ENCODE measurements at regions of chr7 and their contacts with region 1.

Region 1: DNA sequence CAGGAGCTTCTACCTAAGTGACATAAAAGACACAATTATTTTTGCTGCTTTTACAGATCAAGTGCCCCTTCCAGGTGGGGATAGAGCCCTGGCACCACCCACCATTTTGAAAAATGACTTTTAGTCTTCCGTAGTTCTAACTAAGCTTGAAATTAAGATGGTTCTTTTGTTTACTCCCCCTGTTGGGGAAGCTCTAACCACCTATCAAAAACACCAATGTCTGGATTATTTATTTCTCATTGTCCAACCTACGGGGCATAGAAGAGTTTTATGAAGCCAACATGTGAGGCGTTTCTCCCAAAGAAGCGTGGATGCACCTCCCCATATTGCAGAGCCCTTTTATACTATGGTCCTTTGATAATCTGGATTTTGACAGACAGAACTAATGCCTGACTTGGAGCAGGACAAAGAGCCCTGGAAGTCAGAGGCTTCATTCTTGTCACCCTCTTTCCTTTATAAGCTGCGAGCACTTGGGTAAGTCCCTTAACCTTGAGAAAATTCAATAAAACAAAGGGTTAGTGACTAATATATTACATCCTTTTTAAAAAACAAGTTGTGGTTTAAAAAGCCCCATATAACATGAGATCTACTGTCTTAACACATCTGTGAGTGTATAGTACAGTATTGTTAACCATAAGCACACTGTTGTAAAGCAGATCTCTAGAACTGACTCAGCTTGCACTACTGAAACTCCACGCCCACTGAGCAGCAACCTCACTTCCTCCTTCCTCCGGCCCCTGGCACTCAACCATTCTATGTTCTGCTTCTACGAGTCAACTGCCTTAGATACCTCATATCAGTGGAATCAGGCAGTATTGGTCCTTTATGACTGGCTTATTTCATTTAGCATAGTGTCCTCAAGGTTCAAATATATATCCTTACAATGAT is 67.5 kb downstream of the ATXN7L1 start:
- DNase-seq: peak; percentile 99
- ATAC-seq: peak; percentile 92
- H3K4me3 ChIP-seq: no peak overlapping the region
- H3K27ac ChIP-seq: peak overlapping the region; percentile 76
- H3K4me1 ChIP-seq: peaks cover 40% of the 10 kb centered on the region
- H3K27me3 ChIP-seq: no peaks in the 10 kb centered on the region
- CTCF ChIP-seq: no peak
- EP300 ChIP-seq: peak; percentile 99 to 100
- POLR2A ChIP-seq: no peak
- RAD21 ChIP-seq: no peak

Region 2: DNA sequence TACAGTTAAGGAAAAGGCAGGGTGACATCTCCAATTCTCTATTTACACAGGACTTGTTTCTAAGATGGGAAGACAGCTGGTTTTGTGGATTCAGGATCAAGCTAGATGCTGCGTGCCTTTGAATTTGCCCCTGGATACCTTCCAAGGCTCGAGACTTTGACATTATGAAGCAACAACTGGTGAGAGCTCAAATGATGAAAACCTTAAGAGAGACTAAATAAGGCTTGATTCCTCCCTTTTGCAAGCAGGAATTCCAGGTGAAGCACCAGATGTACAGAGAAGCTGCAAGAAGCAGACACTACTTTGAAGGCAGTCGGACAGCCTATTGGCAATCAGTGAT is 13.6 kb before region 1 on chr7:
- CTCF ChIA-PET with region 1: interaction called, 5 read pairs
- POLR2A ChIA-PET with region 1: interaction called, 3 read pairs
- RAD21 ChIA-PET with region 1: interaction called, 4 read pairs
- SMC1A ChIA-PET with region 1: interaction called, 20 read pairs
- in situ Hi-C with region 1: no loop called
- intact Hi-C with region 1: no loop called
- DNase-seq: no peak
- ATAC-seq: no peak
- H3K4me3 ChIP-seq: no peak overlapping the region
- H3K27ac ChIP-seq: no peak overlapping the region
- H3K4me1 ChIP-seq: peaks cover 3% of the 10 kb centered on the region; the same call in 1 of the 2 replicates
- H3K27me3 ChIP-seq: peaks cover 3% of the 10 kb centered on the region in 2 experiments; a peak in 1 of 4 replicates
- CTCF ChIP-seq: no peak
- EP300 ChIP-seq: no peak
- POLR2A ChIP-seq: no peak
- RAD21 ChIP-seq: no peak

Region 3: DNA sequence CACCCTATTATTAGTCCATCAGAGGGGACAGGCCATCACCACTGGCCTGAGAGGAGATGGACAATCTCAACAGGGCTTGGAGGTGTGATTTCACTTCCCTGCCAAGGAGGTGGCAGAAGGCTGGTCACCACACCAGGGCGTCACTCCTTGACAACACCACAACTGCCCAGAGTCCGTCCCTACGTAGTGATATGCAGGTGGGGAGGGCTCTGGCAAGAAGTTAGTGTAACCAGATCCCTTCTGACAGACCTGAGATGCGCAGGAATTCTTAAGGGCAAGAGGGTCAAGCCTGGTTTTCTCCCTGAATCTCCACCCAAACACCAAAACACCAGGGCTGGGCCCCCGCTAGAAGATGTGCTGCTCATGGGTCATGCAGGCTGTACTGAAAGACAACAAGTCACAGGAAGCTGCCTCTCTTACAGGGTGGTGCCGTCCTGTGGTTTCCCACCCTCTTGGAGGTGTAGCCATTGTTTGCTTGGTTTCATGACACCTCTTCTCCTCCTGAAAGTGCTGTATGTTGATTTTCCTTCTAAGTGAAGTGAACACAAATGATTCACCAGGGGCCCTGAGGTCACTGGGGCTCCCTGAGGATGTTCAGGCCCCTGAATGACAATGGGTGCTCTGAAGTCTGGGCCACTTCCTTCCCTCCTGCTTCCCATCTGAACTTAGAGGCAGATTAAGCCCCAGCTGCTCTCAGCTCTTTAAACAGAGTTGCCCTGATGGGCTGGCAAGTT is 40.3 kb after region 1 on chr7:
- CTCF ChIA-PET with region 1: interaction called, 4 read pairs
- POLR2A ChIA-PET with region 1: interaction called, 3 read pairs
- RAD21 ChIA-PET with region 1: interaction called, 4 read pairs
- SMC1A ChIA-PET with region 1: interaction called, 8 read pairs
- in situ Hi-C with region 1: no loop called
- intact Hi-C with region 1: loop called (anchors 2 kb)
- DNase-seq: peak; percentile 9
- ATAC-seq: peak; percentile 82
- H3K4me3 ChIP-seq: no peak overlapping the region
- H3K27ac ChIP-seq: no peak overlapping the region
- H3K4me1 ChIP-seq: peaks cover 4% of the 10 kb centered on the region; the same call in 1 of the 2 replicates
- H3K27me3 ChIP-seq: peaks cover 0 to 4% of the 10 kb centered on the region in 2 experiments; a peak in 1 of 4 replicates
- CTCF ChIP-seq: no peak
- EP300 ChIP-seq: peak; percentile 32 to 42; a peak in 2 of 4 replicates
- POLR2A ChIP-seq: no peak
- RAD21 ChIP-seq: no peak

Region 4: DNA sequence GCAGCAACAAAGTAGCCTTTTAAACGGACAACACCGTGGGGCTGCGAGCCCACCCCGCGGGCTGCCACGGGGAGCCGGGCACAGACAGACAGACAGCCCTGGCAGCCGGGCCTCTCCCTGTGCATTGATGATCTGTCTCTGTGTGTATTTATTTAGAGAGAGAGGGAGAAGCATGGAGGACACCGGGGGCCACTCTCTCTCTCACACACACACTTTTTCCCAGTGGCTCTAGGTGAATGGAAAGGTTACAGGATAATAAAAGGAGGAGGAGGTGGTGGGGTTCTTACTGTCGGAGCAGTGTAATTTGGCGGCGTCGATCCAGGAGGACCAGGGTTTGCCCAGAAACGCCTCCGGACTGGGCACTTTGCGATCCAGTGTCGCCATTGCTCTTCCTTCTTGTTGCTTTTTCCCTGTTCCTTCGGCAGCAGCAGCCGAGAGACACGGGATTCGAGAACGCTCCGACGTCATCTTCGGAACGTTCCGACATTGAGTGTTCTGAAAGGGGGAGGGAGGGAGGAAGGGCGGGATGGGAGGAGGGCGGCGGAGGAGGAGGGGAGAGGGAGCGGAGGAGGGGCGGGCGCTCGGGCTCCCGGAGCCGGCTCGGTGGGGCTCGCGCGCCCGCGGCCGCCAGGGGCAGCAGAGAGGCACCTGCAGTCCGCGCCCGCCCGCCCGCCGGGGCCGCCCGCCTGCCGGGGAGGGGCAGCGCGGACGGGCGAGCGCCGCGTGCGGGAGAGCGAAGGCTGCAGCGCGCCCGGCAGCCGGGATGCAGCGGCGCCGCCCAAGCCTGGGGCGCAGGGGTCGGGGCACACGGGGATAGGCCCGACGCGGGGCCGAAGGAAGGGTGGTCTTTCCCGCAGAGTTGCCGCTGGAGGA is 67.4 kb after region 1 on chr7 and contains the start of gene ATXN7L1:
- CTCF ChIA-PET with region 1: interaction called, 3 read pairs
- POLR2A ChIA-PET with region 1: no interaction called
- RAD21 ChIA-PET with region 1: no interaction called
- SMC1A ChIA-PET with region 1: interaction called, 4 read pairs
- in situ Hi-C with region 1: no loop called
- intact Hi-C with region 1: loop called (anchors 5 kb)
- DNase-seq: no peak
- ATAC-seq: peak; percentile 99
- H3K4me3 ChIP-seq: peak within 1 kb of the TSS; percentile 52
- H3K27ac ChIP-seq: no peak within 1 kb of the TSS
- H3K4me1 ChIP-seq: no peaks in the 10 kb centered on the region
- H3K27me3 ChIP-seq: peaks cover 9 to 13% of the 10 kb centered on the region in 2 experiments
- CTCF ChIP-seq: peak; percentile 6 to 57 (median 50); a peak in 3 of 6 replicates
- EP300 ChIP-seq: no peak
- POLR2A ChIP-seq: peak; percentile 25; the same call in 1 of the 2 replicates
- RAD21 ChIP-seq: 0 out of 2 replicates have a peak, but pooled peaks have one; percentile 10
- polyA plus RNA-seq, gene ATXN7L1: 0.40 to 0.72 TPM

Region 5: GRCh38 chr7:106071356-106071998 is 262.5 kb after region 1 on chr7:
- CTCF ChIA-PET with region 1: no interaction called
- POLR2A ChIA-PET with region 1: interaction called, 5 read pairs
- RAD21 ChIA-PET with region 1: interaction called, 5 read pairs
- SMC1A ChIA-PET with region 1: interaction called, 16 read pairs
- in situ Hi-C with region 1: no loop called
- intact Hi-C with region 1: no loop called
- DNase-seq: peak; percentile 98
- ATAC-seq: peak; percentile 89
- H3K4me3 ChIP-seq: peak overlapping the region; percentile 67
- H3K27ac ChIP-seq: peak overlapping the region; percentile 98
- H3K4me1 ChIP-seq: peaks cover 68% of the 10 kb centered on the region
- H3K27me3 ChIP-seq: no peaks in the 10 kb centered on the region
- CTCF ChIP-seq: no peak
- EP300 ChIP-seq: peak; percentile 71 to 78; a peak in 3 of 4 replicates
- POLR2A ChIP-seq: peak; percentile 79
- RAD21 ChIP-seq: peak; percentile 18; the same call in 1 of the 2 replicates

Region 6: GRCh38 chr7:106870983-106871410 is 1062.0 kb after region 1 on chr7:
- CTCF ChIA-PET with region 1: no interaction called
- POLR2A ChIA-PET with region 1: no interaction called
- RAD21 ChIA-PET with region 1: no interaction called
- SMC1A ChIA-PET with region 1: no interaction called
- in situ Hi-C with region 1: loop called (anchors 10 kb)
- intact Hi-C with region 1: no loop called
- DNase-seq: peak; percentile 95
- ATAC-seq: peak; percentile 90
- H3K4me3 ChIP-seq: no peak overlapping the region
- H3K27ac ChIP-seq: no peak overlapping the region; the same call in 1 of the 2 replicates
- H3K4me1 ChIP-seq: peaks cover 35% of the 10 kb centered on the region
- H3K27me3 ChIP-seq: no peaks in the 10 kb centered on the region
- CTCF ChIP-seq: no peak
- EP300 ChIP-seq: peak; percentile 98 to 100
- POLR2A ChIP-seq: no peak
- RAD21 ChIP-seq: no peak

Measured in GM12878 (cell line).